ENCODE measurements at regions of chr1 and their contacts with region 1.

Region 1: DNA sequence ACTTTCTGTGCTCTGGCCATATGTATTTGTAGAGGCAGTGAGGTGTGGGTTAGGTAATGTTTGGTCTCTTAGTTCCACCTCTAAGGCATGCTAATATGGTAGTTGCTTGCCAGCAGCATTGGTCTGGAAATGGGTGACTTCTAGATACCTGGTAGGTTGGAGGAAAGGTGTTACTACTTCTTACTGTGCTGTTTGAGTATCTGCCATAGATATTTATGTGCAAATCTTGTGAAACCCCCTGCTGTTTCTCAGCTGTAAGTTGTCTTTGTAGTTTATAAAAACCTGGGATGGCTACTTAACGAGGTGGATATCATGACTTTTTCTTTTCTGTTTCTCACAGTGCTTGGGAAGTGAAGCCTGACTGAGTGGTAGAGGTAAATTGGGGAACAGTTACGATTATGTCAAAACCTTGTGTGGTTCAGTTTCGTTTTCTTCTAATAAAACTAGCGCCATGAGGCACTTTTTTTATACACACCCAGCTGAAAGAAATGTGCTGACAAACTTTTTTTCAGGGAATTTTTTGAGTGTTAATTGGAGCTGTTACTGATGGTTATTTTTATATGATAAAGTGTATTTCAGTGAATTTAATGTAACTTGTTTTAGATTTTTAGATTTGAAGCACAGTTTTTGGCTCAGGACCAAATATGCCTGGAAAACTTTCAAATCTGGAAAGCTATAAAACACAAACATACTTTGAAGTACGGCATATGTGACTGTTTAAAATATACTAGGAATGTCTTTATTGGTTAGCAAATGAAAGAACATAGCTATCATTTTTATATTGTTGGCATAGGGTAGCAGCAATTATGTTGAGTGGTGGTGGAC is 42.1 kb downstream of the CAMSAP2 start:
- DNase-seq: no peak
- H3K4me3 ChIP-seq: peak overlapping the region in 2 of 3 experiments; percentile 31 to 52
- H3K27ac ChIP-seq: peak overlapping the region; percentile 54
- H3K4me1 ChIP-seq: peaks cover 22% of the 10 kb centered on the region
- H3K27me3 ChIP-seq: no peaks in the 10 kb centered on the region
- CTCF ChIP-seq: no peak

Region 2: GRCh38 chr1:200620273-200621131 is 160.3 kb before region 1 on chr1 and contains the start of gene KIF14:
- dilution Hi-C with region 1: loop called (anchors 25 kb)
- DNase-seq: peak; percentile 44
- H3K4me3 ChIP-seq: peak within 1 kb of the TSS; percentile 80 to 90 (median 89)
- H3K27ac ChIP-seq: peak within 1 kb of the TSS; percentile 97
- H3K4me1 ChIP-seq: peaks cover 25% of the 10 kb centered on the region
- H3K27me3 ChIP-seq: no peaks in the 10 kb centered on the region
- CTCF ChIP-seq: no peak
- polyA plus RNA-seq, gene KIF14: 0.90 to 6.2 TPM (median 3.7 TPM) in 3 replicates

Region 3: GRCh38 chr1:200845360-200845759 is 64.6 kb after region 1 on chr1:
- dilution Hi-C with region 1: no loop called
- DNase-seq: no peak
- H3K4me3 ChIP-seq: no peak overlapping the region
- H3K27ac ChIP-seq: no peak overlapping the region
- H3K4me1 ChIP-seq: no peaks in the 10 kb centered on the region
- H3K27me3 ChIP-seq: no peaks in the 10 kb centered on the region
- CTCF ChIP-seq: no peak

Region 4: DNA sequence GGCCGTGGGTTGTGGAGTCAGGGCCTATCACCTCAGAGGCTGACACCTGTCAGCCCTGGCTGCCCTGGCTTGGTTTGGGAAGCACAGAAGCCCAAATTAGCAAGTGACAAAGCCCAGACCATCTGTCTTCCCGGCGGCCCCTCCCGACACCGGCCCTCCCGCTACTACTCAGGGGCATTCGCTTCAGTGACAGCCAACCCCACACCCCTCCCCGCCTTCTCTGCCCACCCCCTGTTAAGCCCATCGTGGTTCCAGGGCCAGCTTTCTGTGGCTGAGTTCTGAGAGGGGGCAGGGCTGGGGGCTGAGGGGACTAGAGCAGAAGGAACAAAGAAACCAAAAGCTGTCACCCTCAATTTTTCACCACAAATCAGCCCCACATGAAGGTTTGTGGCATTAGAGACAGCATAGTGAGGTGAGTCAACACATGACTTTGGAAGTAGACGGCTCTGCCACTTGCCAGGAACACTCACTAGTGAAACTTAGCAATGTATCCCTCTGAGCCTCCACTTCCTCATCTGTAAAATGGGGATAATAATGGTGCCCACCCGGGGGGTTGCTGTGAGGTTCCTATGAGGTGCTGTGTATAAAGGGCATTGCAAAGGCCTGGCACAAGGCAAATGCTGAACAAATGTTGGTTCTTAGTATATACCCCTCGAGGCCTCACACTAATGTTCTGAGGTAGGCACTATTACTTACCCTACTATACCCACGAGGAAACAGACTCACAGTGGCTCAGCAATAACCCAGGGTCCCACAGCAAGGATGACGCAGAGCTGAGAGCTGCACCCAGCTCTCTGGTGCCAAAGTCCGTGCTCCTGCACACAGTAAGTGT is 645.9 kb after region 1 on chr1:
- dilution Hi-C with region 1: no loop called
- DNase-seq: no peak
- H3K4me3 ChIP-seq: no peak overlapping the region
- H3K27ac ChIP-seq: no peak overlapping the region
- H3K4me1 ChIP-seq: no peaks in the 10 kb centered on the region
- H3K27me3 ChIP-seq: peaks cover 4% of the 10 kb centered on the region
- CTCF ChIP-seq: no peak

Measured in keratinocyte (primary cell).